ENCODE measurements at regions of chr12 and their contacts with region 1.

Region 1: GRCh38 chr12:49842519-49843352 is at the start of gene BCDIN3D:
- DNase-seq: peak; percentile 78 to 94
- ATAC-seq: peak; percentile 94 to 98
- H3K4me3 ChIP-seq: peak within 1 kb of the TSS; percentile 86
- H3K27ac ChIP-seq: peak within 1 kb of the TSS; percentile 78 to 96
- H3K4me1 ChIP-seq: peaks cover 15% of the 10 kb centered on the region
- CTCF ChIP-seq: no peak
- EP300 ChIP-seq: no peak
- POLR2A ChIP-seq: peak; percentile 91
- RAD21 ChIP-seq: no peak
- polyA plus RNA-seq, gene BCDIN3D: 5.8 and 6.9 TPM in 2 replicates

Region 2: DNA sequence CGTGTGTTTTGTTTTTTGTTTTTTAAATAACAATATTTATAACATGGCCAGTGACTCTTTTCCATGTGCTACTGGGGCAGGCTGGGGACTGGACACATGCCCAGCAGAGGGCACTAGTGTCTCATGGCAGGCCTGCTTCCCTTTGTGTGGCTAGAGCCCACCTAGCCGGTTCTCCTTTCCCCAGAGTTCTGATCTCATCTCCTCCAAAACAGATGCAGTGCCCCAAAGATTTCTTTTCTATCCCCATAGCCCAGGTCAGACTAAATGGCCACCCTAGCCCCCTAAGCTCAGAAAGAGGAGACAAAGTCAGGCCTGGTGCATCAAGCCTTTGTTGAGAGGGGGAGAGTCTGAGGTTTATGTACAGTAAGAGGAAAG is 198.1 kb before region 1 on chr12:
- CTCF ChIA-PET with region 1: interaction called, 16 read pairs
- POLR2A ChIA-PET with region 1: no interaction called
- DNase-seq: peak; percentile 68 to 86
- ATAC-seq: peak; percentile 68 to 92; a peak in 5 of 6 replicates
- H3K4me3 ChIP-seq: no peak overlapping the region
- H3K27ac ChIP-seq: no peak overlapping the region
- H3K4me1 ChIP-seq: no peaks in the 10 kb centered on the region
- CTCF ChIP-seq: peak; percentile 90
- EP300 ChIP-seq: no peak
- POLR2A ChIP-seq: no peak
- RAD21 ChIP-seq: peak; percentile 87 to 96

Region 3: GRCh38 chr12:49673446-49674317 is 169.1 kb before region 1 on chr12:
- CTCF ChIA-PET with region 1: no interaction called
- POLR2A ChIA-PET with region 1: no interaction called
- DNase-seq: no peak
- ATAC-seq: peak; percentile 24 to 32; a peak in 2 of 6 replicates
- H3K4me3 ChIP-seq: no peak overlapping the region
- H3K27ac ChIP-seq: no peak overlapping the region
- H3K4me1 ChIP-seq: no peaks in the 10 kb centered on the region
- CTCF ChIP-seq: no peak
- EP300 ChIP-seq: no peak
- POLR2A ChIP-seq: no peak
- RAD21 ChIP-seq: no peak

Region 4: DNA sequence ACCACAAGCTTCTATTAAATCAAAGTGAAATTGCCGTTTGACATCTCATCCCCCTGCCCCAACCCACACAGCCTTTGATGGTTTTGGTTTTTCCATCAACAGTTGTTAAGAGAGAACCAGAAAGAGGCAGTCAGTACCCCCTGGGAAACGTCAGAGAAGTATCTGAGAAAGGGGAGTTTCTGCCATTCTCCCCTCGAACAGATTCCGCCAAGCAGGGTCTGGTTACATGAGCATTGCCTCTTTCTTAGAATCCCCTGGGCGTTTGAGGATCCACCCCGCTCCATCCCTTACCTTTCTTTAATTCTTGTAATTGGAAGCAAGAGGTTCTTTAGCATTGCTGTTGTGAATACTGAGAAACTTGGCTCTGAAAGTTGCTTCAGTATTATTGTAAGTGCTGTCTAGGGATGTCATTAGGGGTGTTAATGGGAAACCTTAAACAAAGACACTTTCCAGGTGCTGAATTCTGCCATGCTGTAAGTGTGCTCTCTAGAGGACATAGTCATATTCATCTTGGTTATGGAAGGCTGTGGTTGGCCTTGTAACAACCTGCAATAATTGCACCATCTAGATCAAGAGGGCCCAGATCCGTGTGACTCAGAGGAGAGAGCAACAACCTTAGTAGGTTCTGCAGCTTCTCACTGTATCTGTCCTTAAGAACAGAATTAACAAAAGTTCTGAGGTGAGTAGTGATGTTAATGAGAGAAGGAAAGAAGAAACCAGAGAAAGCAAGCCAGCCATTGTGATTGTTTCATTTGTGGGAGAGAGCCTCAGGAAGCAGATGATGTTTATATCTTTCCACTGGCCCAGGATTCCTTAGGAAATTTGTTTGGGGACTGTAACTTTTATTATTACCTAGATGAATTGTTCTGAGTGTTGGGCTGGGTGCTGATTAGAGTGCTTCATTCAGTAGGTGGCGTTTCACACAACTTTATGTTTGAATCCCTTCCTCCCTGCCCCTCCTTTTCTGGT is 92.4 kb before region 1 on chr12:
- CTCF ChIA-PET with region 1: interaction called, 13 read pairs
- POLR2A ChIA-PET with region 1: no interaction called
- DNase-seq: peak in 1 of 2 experiments; percentile 49
- ATAC-seq: peak; percentile 71 to 91
- H3K4me3 ChIP-seq: no peak overlapping the region
- H3K27ac ChIP-seq: peak overlapping the region; percentile 63 to 78
- H3K4me1 ChIP-seq: peaks cover 21% of the 10 kb centered on the region
- CTCF ChIP-seq: no peak
- EP300 ChIP-seq: no peak
- POLR2A ChIP-seq: no peak
- RAD21 ChIP-seq: no peak

Region 5: GRCh38 chr12:49776413-49776812 is 66.3 kb before region 1 on chr12:
- CTCF ChIA-PET with region 1: interaction called, 69 read pairs
- POLR2A ChIA-PET with region 1: no interaction called
- DNase-seq: peak; percentile 83
- ATAC-seq: peak; percentile 93
- H3K4me3 ChIP-seq: no peak overlapping the region
- H3K27ac ChIP-seq: peak overlapping the region; percentile 25 to 67; a peak in 5 of 6 replicates
- H3K4me1 ChIP-seq: no peaks in the 10 kb centered on the region
- CTCF ChIP-seq: peak; percentile 90
- EP300 ChIP-seq: no peak
- POLR2A ChIP-seq: no peak
- RAD21 ChIP-seq: peak; percentile 92 to 97

Region 6: GRCh38 chr12:49800421-49801140 is 42.2 kb before region 1 on chr12:
- CTCF ChIA-PET with region 1: interaction called, 43 read pairs
- POLR2A ChIA-PET with region 1: no interaction called
- DNase-seq: no peak
- ATAC-seq: no peak
- H3K4me3 ChIP-seq: no peak overlapping the region
- H3K27ac ChIP-seq: peak overlapping the region in 1 of 2 experiments; percentile 66; a peak in 3 of 6 replicates
- H3K4me1 ChIP-seq: 0 out of 3 replicates have a peak, but pooled peaks cover 6% of the 10 kb centered on the region
- CTCF ChIP-seq: no peak
- EP300 ChIP-seq: no peak
- POLR2A ChIP-seq: no peak
- RAD21 ChIP-seq: no peak

Region 7: DNA sequence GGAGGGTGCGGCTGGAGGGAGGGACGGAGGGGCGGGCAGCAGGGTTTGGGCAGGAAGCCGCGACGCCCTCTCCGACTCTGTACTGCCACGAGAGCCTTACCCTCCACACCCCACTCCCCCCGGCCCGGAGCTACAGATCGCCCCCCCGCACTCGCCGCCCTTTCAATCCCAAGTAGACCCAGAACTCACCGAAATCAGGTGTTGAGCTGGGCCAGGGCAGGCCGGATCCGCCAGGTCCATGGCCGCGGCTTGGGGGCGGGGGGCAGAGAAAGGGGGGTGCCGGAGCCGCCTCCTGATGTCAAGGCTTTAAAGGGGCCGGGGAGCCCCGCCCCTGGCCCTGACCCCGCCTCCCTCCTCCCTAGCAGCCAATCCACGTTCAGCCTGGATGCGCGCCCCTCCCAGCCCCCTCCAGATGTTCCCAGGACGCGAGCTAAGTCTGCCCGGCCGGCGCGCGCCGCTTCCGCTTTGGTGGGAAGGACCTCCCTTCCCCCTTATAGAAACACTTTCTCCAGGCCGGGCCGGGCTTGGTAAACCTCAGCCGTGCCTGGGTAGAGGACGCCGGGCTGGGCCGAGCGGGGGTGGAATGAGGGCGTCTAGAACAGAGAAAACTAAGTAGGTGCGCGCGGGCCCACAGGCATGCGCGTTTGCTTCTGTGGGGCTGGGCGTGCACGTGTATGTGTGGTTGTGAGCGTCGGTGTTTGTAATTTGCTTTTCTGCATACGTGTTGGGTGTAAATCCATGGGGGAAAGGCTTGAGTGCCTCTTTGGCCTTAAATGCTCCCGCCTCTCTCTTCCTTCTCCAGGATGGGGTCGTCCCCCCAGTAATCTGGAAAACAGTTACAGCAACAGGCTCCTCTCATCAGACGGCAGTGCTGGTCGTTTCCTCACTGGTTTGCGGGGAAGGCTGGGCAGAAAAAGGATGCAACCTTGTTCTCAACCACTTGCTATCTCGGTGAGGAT is 14.3 kb before region 1 on chr12 and contains the start of gene NCKAP5L:
- CTCF ChIA-PET with region 1: interaction called, 54 read pairs
- POLR2A ChIA-PET with region 1: interaction called, 9 read pairs
- DNase-seq: peak; percentile 95 to 97
- ATAC-seq: peak; percentile 92 to 96
- H3K4me3 ChIP-seq: peak within 1 kb of the TSS; percentile 97
- H3K27ac ChIP-seq: peak within 1 kb of the TSS; percentile 92
- H3K4me1 ChIP-seq: peaks cover 25% of the 10 kb centered on the region
- CTCF ChIP-seq: no peak
- EP300 ChIP-seq: no peak
- POLR2A ChIP-seq: peak; percentile 42
- RAD21 ChIP-seq: no peak
- polyA plus RNA-seq, gene NCKAP5L: 3.0 and 3.5 TPM in 2 replicates

Region 8: GRCh38 chr12:50074936-50075807 is 232.4 kb after region 1 on chr12:
- CTCF ChIA-PET with region 1: interaction called, 11 read pairs
- POLR2A ChIA-PET with region 1: interaction called, 3 read pairs
- DNase-seq: peak; percentile 79 to 86
- ATAC-seq: peak; percentile 88 to 95
- H3K4me3 ChIP-seq: no peak overlapping the region
- H3K27ac ChIP-seq: peak overlapping the region in 1 of 2 experiments; percentile 59; a peak in 3 of 6 replicates
- H3K4me1 ChIP-seq: peaks cover 16% of the 10 kb centered on the region
- CTCF ChIP-seq: peak; percentile 94
- EP300 ChIP-seq: no peak
- POLR2A ChIP-seq: no peak
- RAD21 ChIP-seq: peak; percentile 98